Ascending aorta (tissue), 2 donors: ENCODE measurements at regions of chr20 and their contacts with region 1.

Region 1: GRCh38 chr20:407133-407952 is 756 bp upstream of the RBCK1 start:
- DNase-seq: peak; percentile 20 to 81
- H3K4me3 ChIP-seq: peak overlapping the region; percentile 87 to 90
- H3K27ac ChIP-seq: peak overlapping the region; percentile 90 to 95
- H3K4me1 ChIP-seq: peaks cover 0 to 13% of the 10 kb centered on the region in 2 donors
- H3K27me3 ChIP-seq: no peaks in the 10 kb centered on the region
- CTCF ChIP-seq: peak in 2 of 3 experiments; percentile 7 to 28

Region 2: DNA sequence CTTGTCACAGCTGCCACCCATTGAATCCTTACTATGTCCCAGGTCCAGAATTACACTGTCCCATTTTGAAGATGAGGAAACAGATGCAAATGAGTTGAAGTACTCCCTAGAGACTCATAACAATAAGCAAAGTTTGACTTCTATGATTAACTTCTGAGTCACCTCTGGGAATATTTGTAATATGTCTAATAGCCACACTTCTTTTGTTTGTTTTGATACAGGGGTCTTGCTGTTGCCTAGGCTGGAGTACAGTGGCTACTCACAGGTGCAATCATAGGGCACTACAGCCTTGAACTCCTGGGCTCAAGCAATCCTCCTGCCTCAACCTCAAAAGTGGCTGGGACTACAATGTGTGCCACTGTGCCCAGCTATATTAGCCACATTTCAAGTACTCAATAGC is 93.4 kb before region 1 on chr20:
- intact Hi-C with region 1: no loop called
- DNase-seq: no peak
- H3K4me3 ChIP-seq: no peak overlapping the region
- H3K27ac ChIP-seq: no peak overlapping the region
- H3K4me1 ChIP-seq: no peaks in the 10 kb centered on the region
- H3K27me3 ChIP-seq: no peaks in the 10 kb centered on the region
- CTCF ChIP-seq: no peak

Region 3: GRCh38 chr20:347640-348484 is 59.5 kb before region 1 on chr20:
- intact Hi-C with region 1: loop called (anchors 2 kb)
- DNase-seq: peak; percentile 55 to 93
- H3K4me3 ChIP-seq: peak overlapping the region; percentile 67 to 83
- H3K27ac ChIP-seq: peak overlapping the region; percentile 84 to 90
- H3K4me1 ChIP-seq: peaks cover 0 to 6% of the 10 kb centered on the region in 2 donors
- H3K27me3 ChIP-seq: no peaks in the 10 kb centered on the region
- CTCF ChIP-seq: no peak

Region 4: GRCh38 chr20:478949-479429 is 71.6 kb after region 1 on chr20:
- intact Hi-C with region 1: no loop called
- DNase-seq: no peak
- H3K4me3 ChIP-seq: no peak overlapping the region
- H3K27ac ChIP-seq: no peak overlapping the region
- H3K4me1 ChIP-seq: peaks cover 0 to 7% of the 10 kb centered on the region in 2 donors
- H3K27me3 ChIP-seq: no peaks in the 10 kb centered on the region
- CTCF ChIP-seq: peak; percentile 39 to 64 (median 49)

Region 5: GRCh38 chr20:517221-517620 is 109.9 kb after region 1 on chr20:
- intact Hi-C with region 1: no loop called
- DNase-seq: no peak
- H3K4me3 ChIP-seq: no peak overlapping the region
- H3K27ac ChIP-seq: no peak overlapping the region
- H3K4me1 ChIP-seq: peaks cover 0 to 5% of the 10 kb centered on the region in 2 donors
- H3K27me3 ChIP-seq: no peaks in the 10 kb centered on the region
- CTCF ChIP-seq: no peak

Region 6: GRCh38 chr20:833450-834150 is 426.3 kb after region 1 on chr20 and contains the start of gene FAM110A:
- intact Hi-C with region 1: loop called (anchors 5 kb)
- DNase-seq: peak; percentile 87 to 97
- H3K4me3 ChIP-seq: peak within 1 kb of the TSS; percentile 90
- H3K27ac ChIP-seq: peak within 1 kb of the TSS; percentile 72 to 78
- H3K4me1 ChIP-seq: peaks cover 4 to 17% of the 10 kb centered on the region in 2 donors
- H3K27me3 ChIP-seq: no peaks in the 10 kb centered on the region
- CTCF ChIP-seq: no peak
- total RNA-seq, gene FAM110A: 9.7 TPM

Region 7: GRCh38 chr20:1225783-1226654 is 818.7 kb after region 1 on chr20 and contains the start of gene RAD21L1:
- intact Hi-C with region 1: no loop called
- DNase-seq: peak in 1 of 2 donors; percentile 70
- H3K4me3 ChIP-seq: peak within 1 kb of the TSS; percentile 60 to 80
- H3K27ac ChIP-seq: no peak within 1 kb of the TSS
- H3K4me1 ChIP-seq: peaks cover 5 to 6% of the 10 kb centered on the region in 2 donors
- H3K27me3 ChIP-seq: peaks cover 5% of the 10 kb centered on the region
- CTCF ChIP-seq: no peak
- total RNA-seq, gene RAD21L1: not detected